Mammary epithelial cell (primary cell): ENCODE measurements at regions of chr10 and their contacts with region 1.

Region 1: DNA sequence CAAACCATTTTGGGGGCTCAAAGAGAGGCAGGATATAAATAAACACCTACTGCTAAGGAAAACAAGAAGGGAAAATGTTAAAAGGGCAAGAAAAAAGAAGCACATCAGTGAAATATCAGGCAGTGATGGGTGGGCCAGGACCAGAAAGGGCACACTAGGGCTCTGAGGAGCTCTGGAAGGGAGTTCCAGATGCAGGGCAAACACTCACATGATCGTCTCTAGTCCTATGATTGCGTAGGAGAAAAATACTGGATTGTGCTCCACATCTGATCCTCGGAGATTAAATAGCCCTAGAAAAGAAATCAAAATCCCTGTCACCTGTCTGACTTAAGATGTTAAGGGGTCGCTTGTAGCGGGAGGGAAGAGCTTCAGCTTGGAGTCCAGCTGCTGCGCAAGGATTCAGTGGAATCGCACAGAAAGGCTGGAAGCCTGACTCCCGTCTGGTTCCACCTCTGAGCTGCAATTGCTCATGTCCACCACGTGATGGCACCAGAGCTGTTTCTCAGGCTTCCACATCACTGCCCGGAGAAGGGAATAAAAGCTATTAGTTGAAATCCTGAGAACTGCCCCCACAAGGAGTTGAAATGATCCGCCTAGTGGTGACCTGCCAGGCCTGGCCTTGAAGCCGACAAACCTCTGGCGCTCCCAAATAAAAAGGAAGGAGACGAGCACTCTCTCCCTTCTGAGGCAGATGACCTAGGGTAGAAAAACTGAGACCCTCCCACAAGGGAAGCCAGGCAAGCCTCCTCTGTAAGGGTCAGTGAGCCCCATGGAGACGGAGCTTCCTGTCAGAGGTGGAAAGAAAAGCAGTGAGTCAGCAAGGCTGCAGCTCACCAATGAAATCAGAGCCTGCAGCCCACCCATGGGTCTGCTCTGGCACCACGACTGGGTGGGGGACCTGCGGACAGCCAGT is 39.2 kb downstream of the XPNPEP1 start:
- DNase-seq: peak; percentile 72
- H3K4me3 ChIP-seq: no peak overlapping the region
- H3K27ac ChIP-seq: no peak overlapping the region
- H3K4me1 ChIP-seq: peaks cover 4% of the 10 kb centered on the region
- H3K27me3 ChIP-seq: no peaks in the 10 kb centered on the region
- CTCF ChIP-seq: peak; percentile 94 to 98

Region 2: GRCh38 chr10:109922976-109923921 is 39.1 kb after region 1 on chr10 and contains the start of gene XPNPEP1:
- CTCF ChIA-PET with region 1: no interaction called
- dilution Hi-C with region 1: no loop called
- in situ Hi-C with region 1: no loop called
- intact Hi-C with region 1: loop called (anchors 2 kb)
- DNase-seq: peak; percentile 81
- H3K4me3 ChIP-seq: peak within 1 kb of the TSS; percentile 83 to 91 (median 88)
- H3K27ac ChIP-seq: peak within 1 kb of the TSS; percentile 66
- H3K4me1 ChIP-seq: peaks cover 10% of the 10 kb centered on the region
- H3K27me3 ChIP-seq: no peaks in the 10 kb centered on the region
- CTCF ChIP-seq: no peak
- total RNA-seq, gene XPNPEP1: 68.6 to 127 TPM

Region 3: DNA sequence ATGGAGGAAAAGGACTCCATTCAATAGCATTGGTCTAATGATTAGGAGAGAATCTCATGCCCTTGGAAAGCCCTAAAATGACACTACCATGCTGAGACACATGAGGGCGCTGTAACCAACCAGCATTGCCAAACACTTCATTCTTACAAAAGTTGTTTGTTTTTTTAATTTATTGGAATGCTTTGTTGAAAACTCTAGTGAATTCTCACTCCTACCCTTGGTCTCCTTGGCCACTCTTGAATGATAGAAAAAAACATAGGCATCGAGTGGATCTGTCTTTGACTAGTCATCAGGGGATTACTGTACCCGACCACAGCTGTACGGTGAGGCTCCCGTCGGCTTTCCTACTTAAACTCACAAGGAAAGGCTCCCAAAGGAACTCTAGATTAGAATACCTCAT is 94.4 kb after region 1 on chr10:
- CTCF ChIA-PET with region 1: interaction called, 7 read pairs
- dilution Hi-C with region 1: no loop called
- in situ Hi-C with region 1: no loop called
- intact Hi-C with region 1: loop called (anchors 1 kb)
- DNase-seq: peak; percentile 26
- H3K4me3 ChIP-seq: no peak overlapping the region
- H3K27ac ChIP-seq: no peak overlapping the region
- H3K4me1 ChIP-seq: no peaks in the 10 kb centered on the region
- H3K27me3 ChIP-seq: no peaks in the 10 kb centered on the region
- CTCF ChIP-seq: peak; percentile 88 to 96

Region 4: DNA sequence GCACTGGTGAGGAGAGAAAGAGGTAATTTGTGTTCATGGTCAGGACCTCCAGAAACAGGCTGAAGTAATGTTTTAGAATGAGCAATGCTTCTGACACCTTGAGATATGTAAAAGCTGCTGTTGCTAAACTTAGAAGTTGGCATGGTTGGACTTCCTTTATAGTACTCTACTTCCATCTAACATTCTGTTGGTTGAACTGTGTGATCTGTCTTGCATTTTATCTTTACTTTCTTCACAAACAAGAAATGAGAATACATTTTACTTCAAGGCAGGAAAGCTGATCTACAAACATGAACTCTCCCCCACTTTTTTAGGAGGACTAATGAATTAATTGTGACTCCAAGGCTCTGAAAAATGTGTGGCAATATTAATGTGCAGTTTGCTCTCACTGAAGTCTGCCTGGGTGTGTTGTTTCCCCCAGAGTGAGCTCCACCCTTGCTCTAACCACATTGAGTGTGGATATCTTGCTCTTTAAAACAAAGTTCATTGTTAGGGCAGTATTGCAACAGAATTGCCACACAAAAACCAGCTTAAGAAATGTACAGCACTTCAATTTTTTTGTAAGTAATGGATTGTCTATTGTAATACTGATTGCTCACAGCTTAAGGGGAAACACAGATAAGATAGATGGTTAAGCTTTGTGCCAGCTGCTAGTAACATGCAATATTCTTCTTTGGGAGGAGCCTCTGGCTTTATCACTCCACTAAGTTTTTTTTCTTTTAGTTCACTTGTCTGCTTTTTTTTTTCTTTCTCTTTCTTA is 192.6 kb after region 1 on chr10:
- CTCF ChIA-PET with region 1: interaction called, 3 read pairs
- dilution Hi-C with region 1: no loop called
- in situ Hi-C with region 1: no loop called
- intact Hi-C with region 1: loop called (anchors 2 kb)
- DNase-seq: peak; percentile 96
- H3K4me3 ChIP-seq: peak overlapping the region in 2 of 3 experiments; percentile 26 to 33
- H3K27ac ChIP-seq: peak overlapping the region; percentile 82
- H3K4me1 ChIP-seq: peaks cover 44% of the 10 kb centered on the region
- H3K27me3 ChIP-seq: no peaks in the 10 kb centered on the region
- CTCF ChIP-seq: no peak

Region 5: GRCh38 chr10:110225756-110226542 is 341.8 kb after region 1 on chr10:
- CTCF ChIA-PET with region 1: no interaction called
- dilution Hi-C with region 1: no loop called
- in situ Hi-C with region 1: no loop called
- intact Hi-C with region 1: loop called (anchors 5 kb)
- DNase-seq: peak; percentile 92
- H3K4me3 ChIP-seq: peak overlapping the region; percentile 73 to 95 (median 92)
- H3K27ac ChIP-seq: peak overlapping the region; percentile 43
- H3K4me1 ChIP-seq: peaks cover 33% of the 10 kb centered on the region
- H3K27me3 ChIP-seq: no peaks in the 10 kb centered on the region
- CTCF ChIP-seq: peak; percentile 54 to 71

Region 6: DNA sequence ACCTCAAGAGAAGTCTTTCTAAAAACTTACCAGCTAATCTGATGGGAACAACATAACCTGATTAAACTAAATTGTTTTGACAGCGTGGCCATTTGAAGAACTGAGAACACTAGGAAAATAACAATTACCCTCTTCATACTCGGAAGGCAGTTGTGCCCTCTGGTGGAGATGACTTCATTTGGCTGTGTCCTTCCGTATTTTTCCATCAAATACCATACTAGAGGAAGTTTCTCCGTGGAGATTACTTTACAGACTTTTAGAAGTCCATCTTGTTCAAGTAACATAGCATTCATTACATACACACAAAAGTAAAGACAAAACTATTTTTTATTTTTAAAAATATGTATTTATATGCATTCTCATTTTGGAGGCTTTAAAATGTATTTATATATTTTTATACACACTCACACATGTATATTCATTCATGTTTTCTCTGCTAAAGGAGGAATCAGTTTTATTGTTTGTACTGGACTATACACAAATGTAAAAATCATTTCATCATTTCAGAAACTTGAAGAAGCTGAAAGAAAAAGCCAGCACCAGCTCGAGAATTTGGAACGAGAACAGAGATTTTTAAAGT is 395.4 kb after region 1 on chr10:
- CTCF ChIA-PET with region 1: no interaction called
- dilution Hi-C with region 1: no loop called
- in situ Hi-C with region 1: loop called (anchors 25 kb)
- intact Hi-C with region 1: loop called (anchors 2 kb)
- DNase-seq: peak; percentile 43
- H3K4me3 ChIP-seq: no peak overlapping the region
- H3K27ac ChIP-seq: no peak overlapping the region
- H3K4me1 ChIP-seq: peaks cover 7% of the 10 kb centered on the region
- H3K27me3 ChIP-seq: no peaks in the 10 kb centered on the region
- CTCF ChIP-seq: peak; percentile 75

Region 7: DNA sequence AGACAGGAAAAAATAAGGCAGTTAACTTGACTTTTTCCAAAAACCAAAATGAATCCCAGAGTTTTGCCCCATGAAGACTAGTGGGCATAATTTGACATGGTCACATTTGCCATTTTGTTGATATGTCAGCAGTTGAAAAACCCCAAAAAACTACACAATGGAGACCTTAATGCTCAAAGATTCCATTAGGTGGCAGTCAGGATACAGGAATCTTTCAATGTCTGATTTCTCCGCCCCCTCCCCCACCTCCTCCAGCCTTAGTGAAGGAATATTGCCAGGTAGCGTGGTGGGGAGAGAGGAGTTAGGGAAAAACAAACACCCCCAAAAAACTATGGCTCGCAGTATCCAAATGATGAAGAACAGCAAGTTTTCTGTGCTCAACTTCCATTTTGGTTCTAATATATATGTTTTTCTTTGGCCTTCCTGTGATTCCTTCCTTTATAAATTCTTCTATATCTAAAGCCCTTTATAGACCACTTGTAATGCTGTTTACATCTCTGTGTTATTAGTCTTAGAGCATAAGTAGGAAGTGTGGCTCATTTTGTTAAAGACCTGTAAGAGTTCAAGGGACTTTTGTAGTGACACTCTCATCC is 427.3 kb after region 1 on chr10:
- CTCF ChIA-PET with region 1: no interaction called
- dilution Hi-C with region 1: no loop called
- in situ Hi-C with region 1: no loop called
- intact Hi-C with region 1: no loop called
- DNase-seq: peak; percentile 47
- H3K4me3 ChIP-seq: no peak overlapping the region
- H3K27ac ChIP-seq: no peak overlapping the region
- H3K4me1 ChIP-seq: peaks cover 10% of the 10 kb centered on the region
- H3K27me3 ChIP-seq: no peaks in the 10 kb centered on the region
- CTCF ChIP-seq: peak; percentile 66 to 71